ENCODE measurements at regions of chr12 and their contacts with region 1.

Region 1: DNA sequence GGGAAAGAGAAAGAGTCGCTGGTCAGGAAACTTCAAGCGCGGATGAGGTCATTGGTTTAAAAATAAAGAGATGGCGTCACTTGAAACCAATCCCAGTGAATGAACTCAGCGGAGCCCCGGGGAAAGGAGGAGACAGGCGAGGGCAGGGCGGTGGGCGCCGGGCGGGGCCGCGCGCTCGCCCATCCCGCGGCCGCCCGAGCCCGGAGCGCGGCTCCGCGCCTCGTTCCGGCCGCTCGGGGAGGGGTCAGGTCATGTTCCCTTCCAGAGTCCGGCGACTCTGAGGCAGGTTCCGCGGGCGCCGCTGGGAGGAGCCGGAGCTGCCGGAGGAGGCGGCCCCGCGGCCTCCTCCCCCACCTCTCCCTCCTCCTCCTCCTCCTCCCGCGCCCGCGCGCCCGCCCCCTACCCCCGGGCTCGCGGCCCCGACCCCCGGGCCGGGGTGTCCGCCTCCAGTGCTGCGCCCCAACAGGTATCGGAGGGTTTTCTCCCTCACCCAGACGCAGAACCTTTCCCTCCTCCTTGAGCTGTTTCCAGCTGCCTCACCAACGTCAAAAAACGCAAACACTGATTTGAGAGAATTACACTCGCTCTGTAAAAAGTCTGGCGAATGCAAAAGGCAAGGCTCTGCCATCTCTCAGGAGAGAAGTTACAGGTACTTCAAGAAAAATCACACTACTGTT is at the start of gene DUSP16:
- DNase-seq: peak; percentile 96
- ATAC-seq: peak; percentile 98
- total RNA-seq, gene DUSP16: 11.6 TPM

Region 2: GRCh38 chr12:10716704-10717315 is 1845.9 kb before region 1 on chr12:
- intact Hi-C with region 1: loop called (anchors 5 kb)
- DNase-seq: peak; percentile 81
- ATAC-seq: peak; percentile 91

Region 3: GRCh38 chr12:12398026-12398859 is 164.5 kb before region 1 on chr12:
- intact Hi-C with region 1: loop called (anchors 5 kb)
- DNase-seq: peak; percentile 70
- ATAC-seq: peak; percentile 98

Region 4: DNA sequence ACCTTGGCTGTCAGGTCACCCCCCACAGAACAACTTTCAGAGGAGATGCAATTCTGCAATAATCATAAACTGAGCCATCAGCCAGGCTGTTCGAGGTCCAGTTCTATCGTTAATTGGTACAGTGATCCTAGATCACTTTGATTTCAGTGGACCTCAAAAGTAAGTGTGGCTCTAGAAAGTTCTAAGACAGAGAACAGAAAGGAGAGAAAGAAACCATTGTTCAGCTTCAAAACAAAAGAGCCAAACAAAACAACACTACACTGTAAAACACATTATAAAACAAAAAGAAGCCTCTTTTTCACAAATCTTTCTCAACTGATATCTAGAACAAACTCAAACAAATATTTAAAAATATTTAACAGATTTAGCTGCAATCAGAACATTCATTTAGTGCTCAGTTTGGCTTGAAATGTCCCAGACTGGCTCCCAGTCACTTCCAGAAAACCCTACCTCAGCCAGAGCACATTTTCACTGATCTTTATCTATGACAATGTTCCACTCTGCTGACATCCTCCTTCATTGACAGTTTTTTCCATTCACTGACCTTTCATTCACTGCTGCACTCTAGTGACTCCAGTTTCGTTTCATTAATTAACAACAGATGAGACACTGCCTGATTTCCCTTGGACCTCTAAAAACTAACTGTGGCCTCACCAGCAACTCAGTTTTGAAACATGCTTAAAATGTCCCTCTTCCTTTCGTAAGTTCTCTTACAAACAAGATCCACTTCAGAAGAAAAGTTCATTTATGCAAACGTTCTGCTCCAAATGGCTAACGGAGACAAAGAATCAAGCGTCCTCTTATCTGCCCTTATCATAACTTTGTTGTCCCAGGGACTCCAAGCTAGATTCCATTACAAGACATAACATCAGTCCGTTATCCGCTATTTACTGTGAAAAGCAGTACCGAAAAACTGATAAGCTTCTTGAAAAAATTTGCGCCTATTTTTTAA is 56.9 kb before region 1 on chr12:
- intact Hi-C with region 1: loop called (anchors 2 kb)
- DNase-seq: no peak
- ATAC-seq: peak; percentile 77

Region 5: GRCh38 chr12:12534166-12534866 is 28.4 kb before region 1 on chr12:
- intact Hi-C with region 1: loop called (anchors 2 kb)
- DNase-seq: no peak
- ATAC-seq: peak; percentile 31

Region 6: GRCh38 chr12:12582895-12583303 is 20.2 kb after region 1 on chr12:
- intact Hi-C with region 1: no loop called
- DNase-seq: no peak
- ATAC-seq: no peak

Region 7: GRCh38 chr12:12724661-12725545 is 162.2 kb after region 1 on chr12:
- intact Hi-C with region 1: loop called (anchors 2 kb)
- DNase-seq: peak; percentile 98
- ATAC-seq: peak; percentile 89

Measured in Right ventricle myocardium inferior (tissue), 1 donor.